ENCODE measurements at regions of chr14 and their contacts with region 1.

Region 1: GRCh38 chr14:89040460-89041259 is 216.2 kb downstream of the TTC8 start:
- DNase-seq: peak; percentile 82
- CTCF ChIP-seq: peak; percentile 84

Region 2: DNA sequence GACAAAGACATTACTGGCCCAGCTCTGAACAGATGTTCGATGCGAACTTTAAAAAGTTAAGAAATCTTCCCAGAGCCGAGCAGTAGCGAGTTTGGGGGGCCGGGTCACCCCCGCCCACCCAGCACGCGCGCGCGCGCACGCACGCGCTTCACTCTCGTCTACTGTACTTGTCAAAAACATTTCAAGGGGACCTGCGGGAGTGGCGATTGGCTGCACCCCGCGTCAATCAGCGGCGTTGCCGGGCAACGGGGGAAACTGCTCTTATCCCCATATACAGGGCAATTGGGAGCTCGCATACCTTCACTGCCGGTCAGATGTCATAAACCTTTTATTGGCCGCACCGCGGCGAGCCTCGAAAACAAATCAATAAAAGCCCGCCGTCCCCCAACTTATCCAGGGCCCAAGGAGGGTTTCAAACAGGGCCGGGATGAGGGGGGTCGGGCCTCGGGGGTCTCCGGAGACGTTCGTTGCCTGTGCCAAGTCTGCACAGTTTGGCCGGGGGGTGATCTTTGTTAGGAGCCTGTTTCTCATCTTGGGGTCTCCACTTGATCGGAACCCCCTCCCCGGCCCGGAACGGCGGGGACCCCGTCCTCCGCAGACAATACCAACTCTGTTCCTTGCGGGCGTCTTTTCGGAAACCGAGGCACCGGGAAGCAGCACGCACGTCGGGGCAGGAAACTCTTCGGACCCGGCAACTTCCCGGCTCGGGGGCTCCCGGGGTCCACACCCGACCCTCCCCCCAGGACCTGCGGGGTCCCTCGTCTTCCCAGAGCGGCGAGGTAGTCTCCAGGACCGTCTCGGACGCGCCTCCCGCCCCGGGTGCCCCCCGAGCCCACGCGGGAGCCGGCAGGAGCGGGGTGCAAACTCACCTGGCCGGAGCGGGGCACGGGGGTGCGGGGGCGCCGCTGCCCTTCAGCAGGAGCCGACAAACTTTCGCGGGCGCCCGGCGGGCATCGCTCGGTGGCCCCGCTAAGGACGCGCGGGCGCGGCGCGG is 375.6 kb after region 1 on chr14:
- in situ Hi-C with region 1: loop called (anchors 25 kb)
- DNase-seq: peak; percentile 99
- CTCF ChIP-seq: no peak

Region 3: DNA sequence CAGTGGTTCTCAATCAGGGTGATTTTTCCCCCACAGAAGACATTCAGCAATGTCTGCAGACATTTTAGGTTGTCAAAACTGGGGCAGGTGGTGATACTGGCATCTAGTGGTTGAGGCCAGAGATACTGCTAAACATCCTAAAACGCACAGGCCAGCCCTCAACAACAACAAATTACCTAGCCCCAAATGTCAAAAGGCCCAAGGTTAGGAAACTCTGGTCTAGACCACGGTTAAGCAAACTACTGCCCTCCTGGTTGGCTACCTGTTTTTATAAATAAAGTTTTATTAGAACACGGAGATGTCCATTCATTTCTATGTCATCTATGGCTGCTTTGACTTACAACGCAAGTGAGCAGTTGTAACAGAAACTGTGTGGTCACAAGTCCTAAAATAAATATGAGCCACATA is 727.2 kb after region 1 on chr14:
- in situ Hi-C with region 1: loop called (anchors 25 kb)
- DNase-seq: peak; percentile 43
- CTCF ChIP-seq: peak; percentile 48

Measured in GM13976 (cell line).